Gastrocnemius medialis (tissue), 4 donors: ENCODE measurements at regions of chr2 and their contacts with region 1.

Region 1: DNA sequence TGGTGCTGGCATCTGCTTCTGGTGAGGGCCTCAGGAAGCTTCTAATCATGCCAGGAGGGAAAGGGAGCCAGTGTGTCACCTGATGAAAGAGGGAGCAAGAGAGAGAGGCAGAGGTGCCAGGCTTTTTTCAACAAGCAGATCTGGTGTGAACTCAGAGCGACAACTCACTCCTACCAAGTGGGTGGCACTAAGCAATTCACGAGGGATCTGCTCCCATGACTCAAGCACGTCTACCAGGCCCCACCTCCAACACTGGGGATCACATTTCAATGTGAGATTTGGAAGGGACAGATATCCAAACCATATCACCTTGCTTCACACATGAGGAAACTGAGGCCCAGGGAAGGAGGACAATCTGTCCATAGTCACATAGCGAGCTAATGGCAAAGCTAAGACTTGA is 19.1 kb downstream of the FABP1 start:
- DNase-seq: peak; percentile 57 to 74
- ATAC-seq: peak; percentile 90 to 92
- H3K4me3 ChIP-seq: no peak overlapping the region
- H3K27ac ChIP-seq: peak overlapping the region; percentile 71 to 80 (median 76)
- H3K4me1 ChIP-seq: peaks cover 5 to 7% of the 10 kb centered on the region in 2 donors
- H3K27me3 ChIP-seq: no peaks in the 10 kb centered on the region
- CTCF ChIP-seq: no peak
- POLR2A ChIP-seq: no peak

Region 2: GRCh38 chr2:88067189-88067588 is 41.6 kb before region 1 on chr2:
- in situ Hi-C with region 1: no loop called
- intact Hi-C with region 1: loop called (anchors 2 kb)
- DNase-seq: peak; percentile 67 to 84
- ATAC-seq: peak; percentile 88 to 92
- H3K4me3 ChIP-seq: peak overlapping the region; percentile 41 to 71 (median 58)
- H3K27ac ChIP-seq: peak overlapping the region; percentile 94 to 98 (median 98)
- H3K4me1 ChIP-seq: peaks cover 13 to 30% of the 10 kb centered on the region in 2 donors
- H3K27me3 ChIP-seq: no peaks in the 10 kb centered on the region
- CTCF ChIP-seq: no peak
- POLR2A ChIP-seq: no peak